GM12878 (cell line): ENCODE measurements at regions of chr10 and their contacts with region 1.

Region 1: DNA sequence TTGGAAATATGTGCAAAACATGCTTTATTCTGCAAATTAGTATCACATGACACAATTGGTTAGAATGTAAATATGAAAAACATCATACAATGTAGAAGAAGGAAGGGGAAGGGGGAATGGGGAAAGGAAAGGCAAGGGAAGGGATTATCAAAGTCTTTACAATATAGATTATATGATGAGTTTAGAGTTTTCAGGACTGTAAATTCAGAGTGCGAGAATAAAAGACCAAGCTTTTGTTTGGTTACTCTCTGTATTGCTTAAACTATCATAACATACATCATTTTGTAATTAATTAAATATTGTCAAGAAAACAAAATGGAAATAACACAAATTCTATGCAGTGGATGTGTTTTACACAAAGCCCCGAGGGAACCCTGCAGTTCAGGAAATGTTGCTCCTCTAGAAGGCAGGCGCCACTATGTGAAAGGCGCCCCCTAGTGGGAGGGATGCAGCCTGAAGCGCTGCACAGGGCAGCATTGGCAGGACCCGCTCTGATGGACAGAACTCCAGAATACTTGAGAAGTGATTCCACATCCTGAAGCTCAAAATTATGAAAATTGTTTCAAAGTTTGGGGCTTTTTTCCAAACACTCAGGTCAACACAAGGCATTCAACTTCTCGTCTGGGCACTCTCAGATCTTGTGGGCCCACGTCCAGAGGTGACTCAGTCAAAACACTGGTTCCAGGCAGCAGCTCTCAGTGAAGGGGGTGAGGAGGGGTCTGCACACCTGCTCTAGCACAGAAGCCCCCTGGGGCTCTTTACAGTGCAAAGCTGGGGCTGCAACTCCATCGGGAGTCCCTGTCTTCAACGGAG is 31.6 kb upstream of the TMEM254 start:
- DNase-seq: no peak
- ATAC-seq: peak; percentile 97
- H3K4me3 ChIP-seq: no peak overlapping the region
- H3K27ac ChIP-seq: no peak overlapping the region
- H3K4me1 ChIP-seq: no peaks in the 10 kb centered on the region
- H3K27me3 ChIP-seq: no peaks in the 10 kb centered on the region; a peak in 1 of 4 replicates
- CTCF ChIP-seq: peak; percentile 83 to 94 (median 93)
- EP300 ChIP-seq: no peak
- POLR2A ChIP-seq: no peak
- RAD21 ChIP-seq: peak; percentile 69

Region 2: GRCh38 chr10:80064120-80064886 is 17.5 kb after region 1 on chr10:
- CTCF ChIA-PET with region 1: interaction called, 16 read pairs
- POLR2A ChIA-PET with region 1: no interaction called
- RAD21 ChIA-PET with region 1: no interaction called
- SMC1A ChIA-PET with region 1: no interaction called
- in situ Hi-C with region 1: no loop called
- intact Hi-C with region 1: no loop called
- DNase-seq: no peak
- ATAC-seq: no peak
- H3K4me3 ChIP-seq: no peak overlapping the region
- H3K27ac ChIP-seq: no peak overlapping the region
- H3K4me1 ChIP-seq: no peaks in the 10 kb centered on the region
- H3K27me3 ChIP-seq: no peaks in the 10 kb centered on the region
- CTCF ChIP-seq: no peak
- EP300 ChIP-seq: no peak
- POLR2A ChIP-seq: no peak
- RAD21 ChIP-seq: no peak